ENCODE measurements at regions of chr2 and their contacts with region 1.

Region 1: GRCh38 chr2:123364243-123364896 is 660.7 kb upstream of the CNTNAP5 start:
- DNase-seq: no peak
- ATAC-seq: peak; percentile 8; the same call in 1 of the 2 replicates
- H3K4me3 ChIP-seq: no peak overlapping the region
- H3K27ac ChIP-seq: peak overlapping the region; percentile 14; the same call in 1 of the 2 replicates
- H3K4me1 ChIP-seq: peaks cover 19% of the 10 kb centered on the region
- H3K27me3 ChIP-seq: no peaks in the 10 kb centered on the region
- CTCF ChIP-seq: no peak

Region 2: DNA sequence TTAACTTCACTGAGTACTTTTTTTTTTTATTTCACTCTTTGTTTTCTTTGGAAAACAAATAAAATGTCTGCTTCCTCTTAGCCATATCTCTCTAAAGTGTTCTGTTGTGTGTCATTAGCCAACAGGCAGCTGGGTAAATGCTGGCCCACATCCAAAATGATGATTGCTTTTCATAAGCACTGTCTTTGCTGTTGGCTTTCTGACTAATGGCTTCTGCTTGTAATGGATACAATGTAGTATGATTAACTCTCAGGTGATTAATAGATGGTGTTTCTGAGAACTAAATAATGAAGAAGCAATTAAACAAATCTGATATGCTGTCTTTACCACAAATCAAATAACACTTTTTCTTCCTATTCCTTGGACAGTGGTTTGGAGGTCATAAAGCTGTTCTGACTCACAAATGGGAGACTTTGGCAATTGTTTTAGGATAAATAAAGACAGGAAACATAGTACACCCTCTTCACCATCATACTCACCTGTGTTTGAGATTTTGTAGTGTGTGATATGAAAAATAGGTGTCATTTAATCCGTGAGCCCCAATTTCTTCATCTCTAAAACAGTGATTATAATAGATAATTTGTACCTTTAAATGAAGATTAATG is 720.5 kb before region 1 on chr2:
- CTCF ChIA-PET with region 1: no interaction called
- POLR2A ChIA-PET with region 1: no interaction called
- intact Hi-C with region 1: loop called (anchors 5 kb)
- DNase-seq: peak; percentile 97
- ATAC-seq: peak; percentile 95
- H3K4me3 ChIP-seq: no peak overlapping the region
- H3K27ac ChIP-seq: peak overlapping the region; percentile 64
- H3K4me1 ChIP-seq: peaks cover 23% of the 10 kb centered on the region
- H3K27me3 ChIP-seq: no peaks in the 10 kb centered on the region
- CTCF ChIP-seq: no peak

Region 3: GRCh38 chr2:123419976-123420375 is 55.6 kb after region 1 on chr2:
- CTCF ChIA-PET with region 1: no interaction called
- POLR2A ChIA-PET with region 1: interaction called, 22 read pairs
- intact Hi-C with region 1: no loop called
- DNase-seq: no peak
- ATAC-seq: no peak
- H3K4me3 ChIP-seq: no peak overlapping the region
- H3K27ac ChIP-seq: no peak overlapping the region
- H3K4me1 ChIP-seq: no peaks in the 10 kb centered on the region
- H3K27me3 ChIP-seq: no peaks in the 10 kb centered on the region
- CTCF ChIP-seq: no peak

Region 4: DNA sequence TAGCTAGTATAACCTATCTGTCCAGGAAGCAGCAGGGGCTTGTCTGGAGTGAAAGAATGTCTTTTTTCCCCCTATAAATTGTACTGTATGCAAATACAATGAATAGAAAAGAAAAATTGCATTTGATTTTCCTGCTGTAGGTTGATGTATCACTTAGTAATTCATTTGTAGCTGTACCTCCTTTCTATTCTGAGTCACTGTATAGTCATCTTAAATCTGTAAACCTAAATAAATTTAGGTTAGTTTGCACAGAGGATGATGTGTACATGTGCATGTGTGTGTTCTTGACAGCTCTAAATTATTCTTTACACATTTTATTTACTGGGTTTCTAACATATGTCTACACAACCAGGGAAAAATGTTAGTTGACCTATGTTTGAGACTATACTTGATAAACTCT is 182.0 kb after region 1 on chr2:
- CTCF ChIA-PET with region 1: no interaction called
- POLR2A ChIA-PET with region 1: no interaction called
- intact Hi-C with region 1: loop called (anchors 2 kb)
- DNase-seq: peak; percentile 80
- ATAC-seq: peak; percentile 99
- H3K4me3 ChIP-seq: no peak overlapping the region
- H3K27ac ChIP-seq: peak overlapping the region; percentile 49
- H3K4me1 ChIP-seq: peaks cover 15% of the 10 kb centered on the region
- H3K27me3 ChIP-seq: no peaks in the 10 kb centered on the region
- CTCF ChIP-seq: no peak

Region 5: GRCh38 chr2:123670286-123670685 is 305.9 kb after region 1 on chr2:
- CTCF ChIA-PET with region 1: no interaction called
- POLR2A ChIA-PET with region 1: no interaction called
- intact Hi-C with region 1: loop called (anchors 10 kb)
- DNase-seq: peak; percentile 91
- ATAC-seq: peak; percentile 98
- H3K4me3 ChIP-seq: no peak overlapping the region
- H3K27ac ChIP-seq: peak overlapping the region; percentile 50
- H3K4me1 ChIP-seq: peaks cover 19% of the 10 kb centered on the region
- H3K27me3 ChIP-seq: no peaks in the 10 kb centered on the region
- CTCF ChIP-seq: no peak

Region 6: DNA sequence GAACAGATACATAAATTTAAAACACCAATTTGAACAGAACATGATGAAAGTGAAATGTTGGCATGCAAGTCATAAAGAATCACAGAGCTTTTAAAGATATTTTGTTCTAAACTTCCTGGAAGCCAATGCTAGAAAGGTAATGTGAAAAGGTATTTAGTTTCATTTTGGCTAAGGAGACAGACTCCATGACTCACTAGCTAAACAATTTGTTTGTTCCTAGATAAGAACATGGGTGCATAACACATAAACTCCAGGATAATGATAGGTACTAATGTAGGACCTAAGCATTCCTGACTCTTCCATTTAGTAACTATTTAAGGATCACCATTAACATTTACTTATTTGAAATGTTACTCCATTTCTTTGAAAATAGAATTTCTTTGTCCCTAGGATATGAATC is 368.2 kb after region 1 on chr2:
- CTCF ChIA-PET with region 1: no interaction called
- POLR2A ChIA-PET with region 1: no interaction called
- intact Hi-C with region 1: loop called (anchors 5 kb)
- DNase-seq: peak; percentile 88
- ATAC-seq: peak; percentile 95
- H3K4me3 ChIP-seq: no peak overlapping the region
- H3K27ac ChIP-seq: peak overlapping the region; percentile 22; the same call in 1 of the 2 replicates
- H3K4me1 ChIP-seq: peaks cover 15% of the 10 kb centered on the region
- H3K27me3 ChIP-seq: no peaks in the 10 kb centered on the region
- CTCF ChIP-seq: no peak

Region 7: GRCh38 chr2:123993728-123994323 is 629.5 kb after region 1 on chr2:
- CTCF ChIA-PET with region 1: no interaction called
- POLR2A ChIA-PET with region 1: no interaction called
- intact Hi-C with region 1: loop called (anchors 10 kb)
- DNase-seq: peak; percentile 70
- ATAC-seq: peak; percentile 84
- H3K4me3 ChIP-seq: no peak overlapping the region
- H3K27ac ChIP-seq: no peak overlapping the region
- H3K4me1 ChIP-seq: no peaks in the 10 kb centered on the region
- H3K27me3 ChIP-seq: no peaks in the 10 kb centered on the region
- CTCF ChIP-seq: peak; percentile 73

Measured in PC-3 (cell line).